A673 (cell line): ENCODE measurements at regions of chr2 and their contacts with region 1.

Region 1: GRCh38 chr2:156221703-156222102 is 110.8 kb downstream of the NR4A2 start:
- DNase-seq: no peak
- H3K4me3 ChIP-seq: no peak overlapping the region
- H3K27ac ChIP-seq: no peak overlapping the region
- H3K4me1 ChIP-seq: no peaks in the 10 kb centered on the region
- H3K27me3 ChIP-seq: no peaks in the 10 kb centered on the region
- CTCF ChIP-seq: no peak

Region 2: GRCh38 chr2:155310589-155310988 is 911.1 kb before region 1 on chr2:
- CTCF ChIA-PET with region 1: no interaction called
- POLR2A ChIA-PET with region 1: no interaction called
- intact Hi-C with region 1: no loop called
- DNase-seq: peak; percentile 48
- H3K4me3 ChIP-seq: no peak overlapping the region
- H3K27ac ChIP-seq: no peak overlapping the region
- H3K4me1 ChIP-seq: no peaks in the 10 kb centered on the region
- H3K27me3 ChIP-seq: no peaks in the 10 kb centered on the region
- CTCF ChIP-seq: peak; percentile 66

Region 3: DNA sequence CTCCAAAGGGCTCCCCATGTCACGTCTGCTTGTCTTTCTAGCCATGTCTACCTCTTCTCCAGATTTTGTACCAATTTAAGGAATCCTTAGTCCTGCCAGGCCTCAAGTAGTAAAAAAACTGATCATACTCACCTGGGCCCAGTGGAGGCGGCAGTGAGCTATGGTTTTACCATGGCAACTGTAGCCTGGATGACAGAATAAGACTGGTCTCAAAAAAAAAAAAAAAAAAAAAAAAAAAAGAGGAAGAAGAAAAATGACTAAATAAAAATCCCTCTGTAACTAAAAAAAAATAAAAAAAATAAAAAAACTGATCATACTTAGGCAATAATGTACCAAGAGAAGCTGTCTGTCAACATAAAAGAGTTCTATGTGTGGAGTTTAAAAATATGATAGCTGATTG is 110.8 kb before region 1 on chr2:
- CTCF ChIA-PET with region 1: no interaction called
- POLR2A ChIA-PET with region 1: interaction called, 10 read pairs
- intact Hi-C with region 1: no loop called
- DNase-seq: peak; percentile 21
- H3K4me3 ChIP-seq: no peak overlapping the region
- H3K27ac ChIP-seq: no peak overlapping the region
- H3K4me1 ChIP-seq: no peaks in the 10 kb centered on the region
- H3K27me3 ChIP-seq: no peaks in the 10 kb centered on the region
- CTCF ChIP-seq: 0 out of 2 replicates have a peak, but pooled peaks have one; percentile 19